ENCODE measurements at regions of chr17 and their contacts with region 1.

Region 1: DNA sequence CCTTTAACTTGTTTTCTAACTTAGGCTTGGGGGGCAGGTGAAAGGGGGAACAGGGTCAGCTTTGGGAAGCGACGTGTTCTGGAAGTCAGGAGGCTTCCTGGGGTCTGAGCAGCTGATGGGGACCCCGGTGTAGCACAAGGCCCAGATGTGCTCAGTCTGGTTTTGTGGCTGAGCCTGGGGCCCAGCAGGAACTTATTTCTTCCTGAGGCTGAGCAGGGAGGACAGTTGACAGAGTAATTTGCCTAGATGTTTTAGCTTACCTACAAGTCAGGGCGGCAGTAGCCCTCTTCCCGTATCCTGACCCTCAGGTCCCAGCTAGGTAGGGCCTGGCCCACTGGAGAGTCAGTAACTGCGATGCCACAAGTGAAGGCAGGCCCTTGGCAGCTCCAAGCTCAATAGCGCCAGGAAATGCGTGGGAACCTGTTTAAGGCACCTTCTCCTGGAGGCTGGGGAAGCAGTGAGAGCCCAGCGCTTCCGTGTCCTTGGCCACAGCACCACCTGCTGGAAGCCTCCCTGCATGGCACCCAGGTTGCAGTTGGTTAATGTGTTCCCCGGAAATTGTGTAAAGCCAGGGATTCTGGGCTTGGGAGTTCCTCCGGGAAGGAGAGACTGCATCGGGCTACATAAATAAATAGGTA is 5.2 kb downstream of the CCR7 start:
- DNase-seq: peak; percentile 98
- H3K4me3 Mint-ChIP-seq: no peak overlapping the region
- H3K27ac Mint-ChIP-seq: peak overlapping the region; percentile 8
- H3K4me1 Mint-ChIP-seq: peaks cover 6% of the 10 kb centered on the region
- H3K27me3 Mint-ChIP-seq: peaks cover 41% of the 10 kb centered on the region
- CTCF ChIP-seq: peak; percentile 97

Region 2: DNA sequence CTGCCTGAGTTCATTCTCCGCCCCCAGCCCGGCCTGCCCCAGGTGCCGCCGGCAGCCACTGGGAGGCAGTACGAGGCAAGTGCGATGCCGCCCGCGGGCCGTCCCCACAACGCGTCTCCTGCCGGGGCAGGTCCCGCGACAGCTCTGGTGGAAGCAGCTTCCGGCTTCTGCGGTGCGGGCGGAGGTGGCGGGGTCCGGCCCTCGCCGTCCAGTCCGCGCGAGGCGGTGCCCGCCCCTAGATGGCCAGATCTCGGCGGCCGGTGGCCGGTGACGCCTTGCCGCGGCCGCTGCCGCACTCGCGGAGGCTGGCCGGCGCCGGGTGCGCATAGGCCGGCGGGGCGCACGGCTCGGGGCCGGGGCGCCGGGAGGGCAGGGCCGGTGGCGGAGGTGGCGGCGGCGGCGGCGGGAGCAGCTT is 197.4 kb before region 1 on chr17:
- CTCF ChIA-PET with region 1: interaction called, 5 read pairs
- POLR2A ChIA-PET with region 1: no interaction called
- intact Hi-C with region 1: loop called (anchors 1 kb)
- DNase-seq: peak; percentile 74
- H3K4me3 Mint-ChIP-seq: peak overlapping the region; percentile 69
- H3K27ac Mint-ChIP-seq: no peak overlapping the region
- H3K4me1 Mint-ChIP-seq: peaks cover 11% of the 10 kb centered on the region
- H3K27me3 Mint-ChIP-seq: no peaks in the 10 kb centered on the region
- CTCF ChIP-seq: peak; percentile 72

Region 3: GRCh38 chr17:40417609-40418427 is 142.3 kb before region 1 on chr17 and contains the start of gene TOP2A:
- CTCF ChIA-PET with region 1: interaction called, 10 read pairs
- POLR2A ChIA-PET with region 1: interaction called, 10 read pairs
- intact Hi-C with region 1: no loop called
- DNase-seq: peak; percentile 100
- H3K4me3 Mint-ChIP-seq: peak within 1 kb of the TSS; percentile 96
- H3K27ac Mint-ChIP-seq: peak within 1 kb of the TSS; percentile 82
- H3K4me1 Mint-ChIP-seq: peaks cover 8% of the 10 kb centered on the region
- H3K27me3 Mint-ChIP-seq: no peaks in the 10 kb centered on the region
- CTCF ChIP-seq: no peak
- total RNA-seq, gene TOP2A: 100 and 151 TPM in 2 replicates

Region 4: GRCh38 chr17:40490289-40490853 is 69.7 kb before region 1 on chr17:
- CTCF ChIA-PET with region 1: interaction called, 7 read pairs
- POLR2A ChIA-PET with region 1: interaction called, 13 read pairs
- intact Hi-C with region 1: no loop called
- DNase-seq: peak; percentile 93
- H3K4me3 Mint-ChIP-seq: peak overlapping the region; percentile 98
- H3K27ac Mint-ChIP-seq: peak overlapping the region; percentile 83
- H3K4me1 Mint-ChIP-seq: peaks cover 70% of the 10 kb centered on the region
- H3K27me3 Mint-ChIP-seq: no peaks in the 10 kb centered on the region
- CTCF ChIP-seq: no peak

Region 5: DNA sequence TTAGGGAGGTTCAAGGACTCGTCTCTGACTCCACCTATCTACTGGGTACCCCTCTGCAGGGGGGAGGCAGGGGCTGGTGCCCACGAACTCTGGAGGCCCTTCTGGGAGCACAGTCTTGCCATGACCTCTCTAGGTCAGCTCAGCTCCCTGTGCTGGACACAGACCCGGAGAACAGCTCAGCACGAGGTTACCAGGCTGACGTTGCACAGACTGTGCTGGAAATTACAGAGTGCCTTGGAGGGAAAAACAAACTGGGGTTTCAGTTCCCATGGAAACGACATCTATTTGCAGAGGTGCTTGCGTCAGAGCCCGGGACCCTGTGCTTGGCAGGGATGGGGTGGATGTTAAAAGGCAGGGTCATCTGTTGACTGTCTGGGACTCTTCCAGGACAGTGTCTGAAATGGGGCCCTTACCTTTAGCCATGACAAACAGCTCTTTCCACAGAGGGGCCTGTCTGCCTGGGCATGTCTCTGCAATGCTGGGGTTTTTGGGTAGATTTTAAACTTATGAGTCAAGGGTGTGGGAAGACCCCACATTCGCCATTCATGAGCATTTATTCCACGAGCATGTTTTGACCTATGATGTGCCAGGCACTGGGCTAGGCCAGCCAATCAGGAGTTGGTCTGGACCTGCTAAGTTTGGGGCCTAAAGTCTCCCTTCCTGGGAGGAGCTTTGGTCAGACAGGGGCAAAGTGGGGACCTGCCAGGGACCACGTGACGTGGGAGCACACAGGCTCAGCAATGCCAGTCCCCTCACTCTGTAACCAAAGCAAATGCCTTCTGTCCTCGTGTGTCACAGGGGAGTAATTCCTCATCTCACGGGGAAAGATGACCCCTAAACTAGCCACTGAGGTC is 17.3 kb before region 1 on chr17:
- CTCF ChIA-PET with region 1: interaction called, 90 read pairs
- POLR2A ChIA-PET with region 1: interaction called, 13 read pairs
- intact Hi-C with region 1: no loop called
- DNase-seq: peak; percentile 96
- H3K4me3 Mint-ChIP-seq: no peak overlapping the region
- H3K27ac Mint-ChIP-seq: peak overlapping the region; percentile 96
- H3K4me1 Mint-ChIP-seq: peaks cover 21% of the 10 kb centered on the region
- H3K27me3 Mint-ChIP-seq: no peaks in the 10 kb centered on the region
- CTCF ChIP-seq: no peak

Region 6: GRCh38 chr17:40632216-40632615 is 72.1 kb after region 1 on chr17:
- CTCF ChIA-PET with region 1: no interaction called
- POLR2A ChIA-PET with region 1: no interaction called
- intact Hi-C with region 1: no loop called
- DNase-seq: no peak
- H3K4me3 Mint-ChIP-seq: no peak overlapping the region
- H3K27ac Mint-ChIP-seq: no peak overlapping the region
- H3K4me1 Mint-ChIP-seq: no peaks in the 10 kb centered on the region
- H3K27me3 Mint-ChIP-seq: no peaks in the 10 kb centered on the region
- CTCF ChIP-seq: no peak